Sciatic nerve (tissue), 2 donors: ENCODE measurements at regions of chr1 and their contacts with region 1.

Region 1: DNA sequence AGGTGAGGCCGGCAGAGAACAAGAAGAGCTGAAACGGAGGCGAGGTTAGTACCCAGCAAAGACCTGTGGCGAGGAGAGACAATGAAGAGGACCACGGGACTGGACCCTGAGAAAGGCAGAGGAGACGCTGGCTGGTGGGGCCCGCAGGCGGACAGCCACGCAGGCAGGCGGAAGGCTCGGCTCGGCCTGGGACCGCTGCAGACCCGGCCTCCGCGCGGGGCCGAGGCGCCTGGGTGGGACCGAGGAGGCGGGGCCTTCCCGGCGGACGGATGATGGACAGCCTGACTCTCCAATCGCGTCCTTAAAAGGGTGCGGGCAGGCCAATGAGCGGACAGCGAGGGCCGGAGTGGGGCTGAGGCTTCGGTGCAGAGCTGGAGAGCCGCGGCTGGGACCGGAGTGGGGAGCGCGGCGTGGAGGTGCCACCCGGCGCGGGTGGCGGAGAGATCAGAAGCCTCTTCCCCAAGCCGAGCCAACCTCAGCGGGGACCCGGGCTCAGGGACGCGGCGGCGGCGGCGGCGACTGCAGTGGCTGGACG is at the start of gene MPZL1:
- DNase-seq: peak; percentile 98
- ATAC-seq: peak; percentile 98
- total RNA-seq, gene MPZL1: 102 TPM

Region 2: DNA sequence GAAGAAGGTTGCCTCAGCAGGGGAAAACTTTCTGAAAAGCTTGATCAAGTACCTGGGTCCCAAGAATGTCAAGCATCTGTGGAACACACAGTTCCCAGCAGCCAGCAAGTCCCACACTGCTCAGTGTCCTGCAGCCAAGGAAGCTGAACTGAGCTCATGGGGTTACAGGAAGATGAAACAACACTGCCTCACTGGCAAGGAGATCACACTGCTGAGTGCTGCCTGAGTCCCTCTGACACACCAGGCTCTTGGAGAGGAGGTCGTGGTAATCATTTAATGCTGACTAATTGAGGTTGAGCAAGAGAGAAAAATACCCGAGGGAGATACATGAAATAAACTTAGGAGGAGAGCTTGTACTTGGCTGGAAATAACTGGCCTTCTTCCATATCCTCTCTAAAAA is 75.3 kb after region 1 on chr1:
- intact Hi-C with region 1: loop called (anchors 10 kb)
- DNase-seq: peak; percentile 78
- ATAC-seq: peak; percentile 97

Region 3: GRCh38 chr1:169443923-169444322 is 1722.2 kb after region 1 on chr1:
- intact Hi-C with region 1: no loop called
- DNase-seq: no peak
- ATAC-seq: no peak